Activated CD4-positive, alpha-beta T cell treated with anti-CD3 and anti-CD28 coated beads, Interleukin-2, amount 10 ng/mL, durations not matched to agents 24 days and 14 days (primary cell): ENCODE measurements at regions of chr7 and their contacts with region 1.

Region 1: GRCh38 chr7:85587785-85588184 is 400.9 kb upstream of the SEMA3D start:
- DNase-seq: no peak
- H3K4me3 Mint-ChIP-seq: no peak overlapping the region
- H3K27ac Mint-ChIP-seq: no peak overlapping the region
- H3K4me1 Mint-ChIP-seq: no peaks in the 10 kb centered on the region
- H3K27me3 Mint-ChIP-seq: no peaks in the 10 kb centered on the region

Region 2: DNA sequence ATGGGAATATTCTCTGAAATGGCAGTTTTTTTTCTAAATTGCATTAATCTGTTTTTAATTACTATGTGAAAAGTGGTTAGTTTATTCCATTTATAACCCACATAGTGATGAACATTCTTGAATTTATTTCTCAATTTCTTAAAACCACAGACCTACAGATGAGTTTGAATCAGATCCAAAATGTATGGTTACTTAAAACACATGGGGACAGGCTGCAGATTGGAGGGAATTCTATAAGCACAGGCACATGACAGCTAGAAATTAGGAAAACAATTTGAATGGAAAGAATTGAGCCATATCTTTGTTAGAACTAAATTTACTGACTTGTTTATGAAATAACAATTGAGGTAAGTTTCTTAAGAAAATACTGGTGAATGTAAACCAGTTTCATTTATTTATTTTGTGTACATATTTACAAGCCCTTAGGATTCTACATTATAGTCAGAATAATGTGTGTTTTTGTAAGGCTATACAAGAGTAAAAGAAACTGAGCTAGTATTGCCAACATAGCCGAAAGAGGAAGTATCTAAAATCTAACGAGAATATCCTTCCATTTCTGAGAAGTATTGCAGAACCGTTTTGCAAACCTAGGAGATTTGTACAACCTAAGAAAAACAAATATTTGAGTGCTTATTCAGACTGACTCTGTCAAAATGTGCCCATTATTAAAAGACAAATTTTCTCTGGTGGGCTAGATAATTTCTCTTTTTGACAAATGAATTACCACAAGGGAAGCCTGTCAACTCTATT is 33.3 kb after region 1 on chr7:
- intact Hi-C with region 1: loop called (anchors 2 kb)
- DNase-seq: no peak
- H3K4me3 Mint-ChIP-seq: no peak overlapping the region
- H3K27ac Mint-ChIP-seq: no peak overlapping the region
- H3K4me1 Mint-ChIP-seq: no peaks in the 10 kb centered on the region
- H3K27me3 Mint-ChIP-seq: no peaks in the 10 kb centered on the region